GM12878 (cell line): ENCODE measurements at regions of chr16 and their contacts with region 1.

Region 1: GRCh38 chr16:67461600-67462592 is 19.1 kb downstream of the ATP6V0D1 start:
- DNase-seq: no peak
- ATAC-seq: no peak
- H3K4me3 ChIP-seq: no peak overlapping the region
- H3K27ac ChIP-seq: no peak overlapping the region
- H3K4me1 ChIP-seq: peaks cover 4% of the 10 kb centered on the region
- H3K27me3 ChIP-seq: no peaks in the 10 kb centered on the region
- CTCF ChIP-seq: no peak
- EP300 ChIP-seq: no peak
- POLR2A ChIP-seq: no peak
- RAD21 ChIP-seq: no peak

Region 2: DNA sequence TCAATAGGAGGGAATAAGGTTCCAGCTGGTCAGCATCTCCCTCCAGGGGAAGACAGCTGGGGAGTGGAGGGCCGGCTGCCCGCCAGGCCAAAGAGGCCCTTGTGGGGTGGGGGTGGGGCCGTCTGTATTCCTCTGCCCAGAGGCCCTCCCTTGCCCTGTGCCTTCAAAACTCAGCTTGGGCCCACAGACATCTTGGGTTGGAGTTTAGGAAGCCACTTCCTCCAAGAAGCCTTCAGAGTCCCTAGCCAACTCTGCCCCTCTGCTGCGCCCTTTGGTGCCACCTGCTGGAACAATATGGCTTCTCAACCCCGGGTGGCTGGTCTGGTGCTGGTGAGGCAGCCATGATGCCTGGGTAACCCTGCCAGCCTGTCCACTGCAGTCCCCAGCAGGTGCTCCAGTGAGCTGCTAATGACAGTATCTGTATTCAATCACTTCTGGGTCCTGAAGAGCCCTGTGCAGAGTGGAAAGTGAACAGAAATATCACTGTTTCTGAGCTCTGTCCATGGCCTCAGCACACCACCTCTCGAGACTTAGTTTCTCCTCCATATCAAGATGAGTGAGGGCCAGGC is 14.3 kb before region 1 on chr16:
- CTCF ChIA-PET with region 1: interaction called, 25 read pairs
- POLR2A ChIA-PET with region 1: no interaction called
- RAD21 ChIA-PET with region 1: interaction called, 6 read pairs
- SMC1A ChIA-PET with region 1: interaction called, 3 read pairs
- in situ Hi-C with region 1: no loop called
- intact Hi-C with region 1: no loop called
- DNase-seq: peak; percentile 15
- ATAC-seq: peak; percentile 98
- H3K4me3 ChIP-seq: no peak overlapping the region
- H3K27ac ChIP-seq: no peak overlapping the region
- H3K4me1 ChIP-seq: no peaks in the 10 kb centered on the region
- H3K27me3 ChIP-seq: no peaks in the 10 kb centered on the region
- CTCF ChIP-seq: peak; percentile 71 to 80 (median 75)
- EP300 ChIP-seq: no peak
- POLR2A ChIP-seq: no peak
- RAD21 ChIP-seq: peak; percentile 67

Region 3: DNA sequence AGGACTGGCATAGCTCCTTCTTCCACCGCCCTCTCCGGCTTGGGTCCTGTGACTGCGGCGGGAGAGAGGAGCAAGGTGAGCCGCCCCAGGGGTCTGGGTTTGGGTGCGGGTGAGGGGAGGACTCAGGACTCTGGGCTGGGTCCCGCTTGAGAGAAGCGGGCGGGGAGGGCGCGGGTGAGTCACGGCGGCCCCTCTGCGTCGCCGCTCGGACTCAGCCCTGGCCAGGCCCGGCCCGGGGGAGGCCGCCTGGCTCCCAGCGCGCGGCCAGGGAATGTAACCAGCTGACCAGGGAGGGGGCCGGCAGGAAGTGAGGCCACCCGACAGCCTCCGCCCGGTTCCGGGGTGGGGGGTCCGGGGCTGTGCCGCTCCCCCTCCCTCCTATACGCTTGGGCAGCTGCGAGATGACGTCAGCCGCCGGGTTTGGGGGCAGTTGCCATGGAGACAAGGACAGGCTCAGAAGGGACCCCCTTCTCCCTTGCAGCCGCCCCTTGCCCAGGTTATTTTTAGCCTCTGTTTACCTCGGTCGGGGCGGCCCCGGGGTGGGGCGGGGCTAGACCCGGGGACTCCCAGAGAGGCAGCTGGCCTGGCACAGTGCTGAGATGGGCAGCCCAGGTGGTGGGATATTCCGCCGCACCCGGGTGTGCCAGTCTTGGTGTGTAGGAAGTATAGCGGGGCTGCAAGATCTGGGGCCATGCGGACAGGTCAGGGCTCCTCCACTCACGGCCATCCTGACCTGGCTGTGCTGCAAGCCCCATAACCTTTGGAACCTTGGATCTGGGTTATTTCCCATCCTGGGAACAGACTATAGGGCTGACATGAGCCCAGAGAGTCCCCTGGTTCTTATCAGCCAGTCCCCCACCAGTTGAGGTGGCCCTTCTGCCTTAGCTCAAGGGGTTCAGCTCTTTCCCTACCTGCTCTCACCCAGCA is 68.4 kb after region 1 on chr16:
- CTCF ChIA-PET with region 1: no interaction called
- POLR2A ChIA-PET with region 1: no interaction called
- RAD21 ChIA-PET with region 1: no interaction called
- SMC1A ChIA-PET with region 1: no interaction called
- in situ Hi-C with region 1: no loop called
- intact Hi-C with region 1: no loop called
- DNase-seq: no peak
- ATAC-seq: peak; percentile 66
- H3K4me3 ChIP-seq: peak overlapping the region; percentile 90; the same call in 1 of the 2 replicates
- H3K27ac ChIP-seq: peak overlapping the region; percentile 22; the same call in 1 of the 2 replicates
- H3K4me1 ChIP-seq: peaks cover 34% of the 10 kb centered on the region
- H3K27me3 ChIP-seq: no peaks in the 10 kb centered on the region
- CTCF ChIP-seq: no peak
- EP300 ChIP-seq: 0 out of 4 replicates have a peak, but pooled peaks of 1 of the 2 experiments have one; percentile 5
- POLR2A ChIP-seq: peak; percentile 57
- RAD21 ChIP-seq: no peak